ENCODE measurements at regions of chr17 and their contacts with region 1.

Region 1: GRCh38 chr17:78140169-78140976 is 5.8 kb upstream of the C17orf99 start:
- DNase-seq: peak; percentile 100
- ATAC-seq: peak; percentile 91
- H3K4me3 Mint-ChIP-seq: peak overlapping the region; percentile 28
- H3K27ac Mint-ChIP-seq: peak overlapping the region; percentile 85
- H3K4me1 Mint-ChIP-seq: peaks cover 67% of the 10 kb centered on the region
- H3K27me3 Mint-ChIP-seq: no peaks in the 10 kb centered on the region
- CTCF ChIP-seq: no peak

Region 2: DNA sequence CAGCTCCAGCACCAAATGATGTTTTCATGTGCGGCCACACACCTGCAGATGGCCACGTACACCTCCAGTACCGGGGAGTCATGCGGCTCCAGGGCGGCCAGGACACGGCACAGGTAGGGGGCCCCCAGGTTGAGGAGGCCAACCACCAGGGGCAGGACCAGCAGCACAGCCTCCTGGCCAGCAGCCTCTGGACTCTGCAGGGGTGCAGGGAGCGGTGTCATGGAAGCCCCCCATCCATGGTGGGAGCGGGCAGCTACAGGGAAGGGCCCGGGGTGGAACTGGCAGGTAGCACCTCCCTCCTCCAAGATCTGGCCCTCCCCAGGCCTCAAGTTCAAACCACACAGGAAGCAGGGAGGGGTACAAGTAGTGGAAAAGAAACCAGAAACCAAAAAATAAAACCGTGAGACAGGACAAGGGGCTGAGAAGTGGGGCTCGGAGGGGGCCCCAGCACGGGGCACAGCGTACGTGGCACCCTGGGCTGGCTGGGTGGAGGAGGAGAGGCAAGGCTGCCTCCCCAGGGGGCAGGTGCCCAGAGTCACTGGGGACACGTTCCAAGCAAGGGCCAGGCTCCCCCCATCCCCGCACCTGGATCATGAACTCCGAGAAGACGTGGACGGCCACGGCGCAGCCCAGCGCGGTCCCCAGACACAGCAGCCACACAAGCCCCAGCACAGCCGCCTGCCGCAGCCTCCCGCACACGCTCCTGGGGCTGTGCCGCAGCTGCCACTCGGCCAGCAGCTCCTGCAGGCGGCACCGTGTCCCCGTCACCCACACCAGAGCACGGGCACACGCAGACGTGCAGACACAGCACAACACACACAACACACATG is 19.2 kb before region 1 on chr17:
- CTCF ChIA-PET with region 1: interaction called, 83 read pairs
- POLR2A ChIA-PET with region 1: interaction called, 335 read pairs
- intact Hi-C with region 1: loop called (anchors 2 kb)
- DNase-seq: peak; percentile 79
- ATAC-seq: peak; percentile 58
- H3K4me3 Mint-ChIP-seq: peak overlapping the region; percentile 77
- H3K27ac Mint-ChIP-seq: peak overlapping the region; percentile 94
- H3K4me1 Mint-ChIP-seq: peaks cover 59% of the 10 kb centered on the region
- H3K27me3 Mint-ChIP-seq: no peaks in the 10 kb centered on the region
- CTCF ChIP-seq: no peak

Region 3: GRCh38 chr17:78253946-78254676 is 113.7 kb after region 1 on chr17:
- CTCF ChIA-PET with region 1: no interaction called
- POLR2A ChIA-PET with region 1: no interaction called
- intact Hi-C with region 1: no loop called
- DNase-seq: peak; percentile 88
- ATAC-seq: peak; percentile 66
- H3K4me3 Mint-ChIP-seq: peak overlapping the region; percentile 75
- H3K27ac Mint-ChIP-seq: peak overlapping the region; percentile 81
- H3K4me1 Mint-ChIP-seq: peaks cover 40% of the 10 kb centered on the region
- H3K27me3 Mint-ChIP-seq: no peaks in the 10 kb centered on the region
- CTCF ChIP-seq: no peak

Measured in activated CD8-positive, alpha-beta T cell treated with anti-CD3 and anti-CD28 coated beads for 36 hours (primary cell).